Posterior cingulate gyrus (tissue), 11 donors: ENCODE measurements at regions of chr20 and their contacts with region 1.

Region 1: GRCh38 chr20:44683263-44684046 is 31.7 kb upstream of the CCN5 start:
- DNase-seq: peak in 7 of 10 donors; percentile 24 to 86 (median 62)

Region 2: GRCh38 chr20:44166477-44166876 is 517.0 kb before region 1 on chr20:
- intact Hi-C with region 1: no loop called
- DNase-seq: no peak

Region 3: DNA sequence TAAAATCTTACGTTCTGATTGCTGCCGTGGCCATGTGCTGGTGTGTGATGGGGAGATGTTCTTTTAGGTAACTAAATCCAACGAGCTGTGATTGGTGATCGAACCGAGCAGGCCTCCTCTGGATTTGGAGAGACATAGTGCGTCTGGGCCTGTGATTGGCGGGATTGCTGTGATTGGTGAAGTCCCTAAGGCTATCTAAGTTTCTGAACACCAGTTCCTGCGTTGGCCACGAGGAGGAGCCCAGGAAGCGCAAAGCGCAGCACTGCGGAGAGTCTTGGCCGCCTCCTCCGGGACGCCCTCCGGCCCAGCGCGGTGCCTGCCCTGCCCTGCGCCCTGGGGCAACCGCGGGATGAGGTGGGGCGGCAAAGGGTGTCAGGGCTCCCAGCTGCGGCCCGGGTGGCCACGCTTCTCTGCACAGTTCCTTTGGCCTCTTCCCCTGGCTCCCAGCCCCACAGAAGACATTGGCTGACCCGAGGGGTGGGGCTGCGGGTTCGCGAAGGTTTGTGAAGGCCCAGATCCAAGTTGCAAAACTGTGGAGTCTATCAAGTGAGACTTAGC is 294.9 kb before region 1 on chr20:
- intact Hi-C with region 1: loop called (anchors 5 kb)
- DNase-seq: peak; percentile 38 to 95 (median 71)

Region 4: GRCh38 chr20:44598423-44599305 is 84.8 kb before region 1 on chr20:
- intact Hi-C with region 1: no loop called
- DNase-seq: no peak

Region 5: DNA sequence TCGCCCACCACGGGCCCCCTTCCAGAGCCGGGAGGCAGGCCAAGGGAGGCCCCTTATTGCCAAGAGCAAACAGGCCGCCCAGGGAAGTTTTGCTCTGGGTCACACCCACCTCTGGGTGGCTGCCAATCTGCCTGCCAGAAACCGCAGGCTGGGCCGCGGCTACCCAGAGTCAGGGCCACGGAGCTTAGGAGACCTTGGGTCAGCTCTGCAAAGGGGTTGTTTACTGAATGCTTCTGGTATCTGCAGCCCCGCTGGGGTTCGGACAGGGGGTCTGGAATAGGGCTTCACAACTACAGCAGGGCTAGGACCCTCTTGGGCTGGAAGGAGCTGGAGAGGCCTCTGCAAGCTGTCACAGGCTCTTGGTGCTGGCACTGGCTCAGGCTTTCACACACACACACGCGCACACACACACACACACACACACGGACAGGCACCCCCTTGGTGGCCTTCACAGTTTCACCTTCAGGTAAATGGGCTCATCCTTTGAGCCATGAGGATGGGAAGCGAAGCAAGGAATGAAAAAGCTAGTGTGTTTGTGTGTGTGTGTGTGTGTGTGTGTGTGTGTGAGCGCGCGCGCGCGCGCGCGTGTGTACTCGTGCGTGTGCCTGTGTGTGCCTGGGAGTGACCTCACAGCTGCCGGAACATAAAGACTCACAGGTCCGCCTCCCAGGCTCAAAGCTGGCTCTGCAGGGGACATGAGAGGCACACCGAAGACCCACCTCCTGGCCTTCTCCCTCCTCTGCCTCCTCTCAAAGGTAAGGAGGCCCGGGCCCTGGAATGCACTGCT is 31.4 kb after region 1 on chr20 and contains the start of gene CCN5:
- intact Hi-C with region 1: no loop called
- DNase-seq: peak; percentile 43 to 94 (median 60)

Region 6: GRCh38 chr20:44733341-44734069 is 50.0 kb after region 1 on chr20:
- intact Hi-C with region 1: loop called (anchors 1 kb)
- DNase-seq: peak; percentile 58 to 97 (median 80)

Region 7: DNA sequence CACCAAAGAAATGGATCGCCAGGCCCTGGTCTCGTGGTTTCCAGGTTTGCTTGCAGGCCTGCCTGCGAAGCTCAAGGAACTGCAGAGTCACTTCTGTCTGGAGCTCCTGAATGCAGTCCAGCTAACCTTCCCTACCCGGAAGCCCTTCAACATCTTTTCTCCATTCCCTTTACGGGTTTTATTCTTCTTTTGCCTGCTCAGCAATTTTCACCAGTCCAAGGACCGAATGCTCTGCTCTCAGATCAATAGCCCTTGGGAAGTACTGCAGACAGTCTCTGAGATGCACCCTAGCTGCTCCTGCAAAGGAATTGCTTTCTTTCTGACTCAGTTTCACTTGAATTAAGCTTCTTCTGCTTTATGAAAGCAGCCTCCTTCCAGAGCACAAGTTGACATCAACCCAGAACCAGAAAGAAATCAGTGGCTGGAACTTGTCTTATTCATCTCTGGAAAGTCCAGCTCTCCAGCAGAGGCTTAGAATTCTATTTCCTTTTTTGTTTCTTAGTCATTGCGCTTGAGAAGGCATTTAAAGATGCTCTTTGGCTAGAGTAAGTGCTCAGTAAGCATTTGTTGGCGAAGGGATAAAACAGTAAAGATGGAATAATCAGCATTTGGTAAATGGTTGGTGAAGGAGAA is 183.4 kb after region 1 on chr20:
- intact Hi-C with region 1: loop called (anchors 1 kb)
- DNase-seq: no peak

Region 8: DNA sequence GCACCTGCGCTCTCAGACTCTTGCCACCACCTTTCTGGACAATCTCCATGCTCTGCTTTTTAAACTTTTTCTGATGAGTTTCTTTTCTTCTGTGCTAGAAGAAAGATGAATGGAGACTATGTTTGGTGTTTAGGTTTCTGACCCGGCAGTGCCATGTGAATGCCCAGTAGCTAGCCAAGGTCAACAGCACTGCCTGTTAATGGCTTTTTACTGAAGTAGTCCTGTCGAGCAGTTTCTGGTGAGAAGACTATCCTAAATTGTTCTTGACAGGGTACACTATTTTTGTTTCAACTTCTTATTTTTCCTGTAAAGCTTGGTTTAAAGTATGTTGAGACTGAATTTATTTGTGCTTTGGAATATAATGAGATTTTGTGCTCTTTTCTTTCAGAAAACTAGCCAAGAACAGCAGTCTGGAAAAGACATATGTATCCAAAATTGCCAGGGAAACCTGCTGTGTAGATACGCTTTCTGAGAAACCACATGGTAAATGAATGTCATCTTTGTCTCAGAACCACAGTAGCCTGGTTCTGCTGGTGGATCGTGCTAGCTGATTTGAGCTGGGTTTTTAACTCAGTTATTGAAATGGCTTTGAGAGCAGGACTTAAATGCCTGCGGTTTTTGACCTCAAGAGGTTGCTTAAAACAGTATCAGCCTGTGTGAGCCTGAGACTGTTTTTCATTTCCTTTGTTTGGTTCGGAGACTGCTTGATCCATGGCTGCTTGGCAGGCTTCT is 369.4 kb after region 1 on chr20:
- intact Hi-C with region 1: no loop called
- DNase-seq: no peak